ENCODE measurements at regions of chr2 and their contacts with region 1.

Region 1: GRCh38 chr2:68251187-68251854 is 1.0 kb downstream of the PPP3R1 start:
- DNase-seq: peak; percentile 84
- ATAC-seq: peak; percentile 79
- H3K4me3 ChIP-seq: peak overlapping the region; percentile 83 to 97 (median 96)
- H3K27ac ChIP-seq: peak overlapping the region; percentile 94
- H3K4me1 ChIP-seq: peaks cover 54% of the 10 kb centered on the region
- H3K27me3 ChIP-seq: no peaks in the 10 kb centered on the region; a peak in 1 of 5 replicates
- CTCF ChIP-seq: peak; percentile 72
- EP300 ChIP-seq: no peak
- POLR2A ChIP-seq: peak in 1 of 2 experiments; percentile 68; a peak in 3 of 4 replicates
- RAD21 ChIP-seq: peak; percentile 51; the same call in 1 of the 2 replicates

Region 2: DNA sequence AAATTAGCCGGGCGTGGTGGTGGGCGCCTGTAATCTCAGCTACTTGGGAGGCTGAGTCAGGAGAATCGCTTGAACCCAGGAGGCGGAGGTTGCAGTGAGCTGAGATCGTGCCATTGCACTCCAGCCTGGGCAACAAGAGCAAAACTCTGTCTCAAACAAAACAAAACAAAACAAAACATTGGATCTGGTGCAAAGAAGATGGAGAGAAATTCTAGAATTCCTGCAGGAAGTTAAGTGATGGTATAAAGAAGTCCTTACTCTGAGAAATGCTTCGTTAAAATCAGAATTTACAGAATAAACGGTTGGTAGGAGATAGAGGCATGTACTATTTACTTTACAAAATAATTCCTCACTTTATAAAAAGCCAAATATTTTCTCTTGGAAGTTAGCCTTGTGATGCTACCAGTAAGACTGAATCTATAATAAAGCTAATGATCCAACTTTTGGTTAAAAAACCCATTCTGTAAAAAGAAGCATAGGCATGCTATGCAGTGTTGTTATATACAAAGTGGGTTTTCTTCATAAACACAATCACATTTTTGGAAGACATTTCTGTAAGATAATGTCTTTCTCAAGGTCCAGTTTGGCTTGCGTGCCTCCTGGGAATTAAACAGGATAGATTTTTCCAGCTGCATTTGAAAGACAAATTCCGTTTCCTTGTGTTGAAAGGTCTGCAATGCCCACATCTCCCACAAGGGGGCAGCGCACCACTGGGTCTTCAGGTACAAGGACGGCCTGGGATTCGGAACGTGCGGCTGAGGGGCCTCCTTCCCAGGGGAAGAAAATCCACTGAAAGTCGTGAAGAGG is 129.2 kb before region 1 on chr2:
- CTCF ChIA-PET with region 1: interaction called, 3 read pairs
- POLR2A ChIA-PET with region 1: no interaction called
- in situ Hi-C with region 1: no loop called
- intact Hi-C with region 1: loop called (anchors 1 kb)
- DNase-seq: peak; percentile 78
- ATAC-seq: peak; percentile 63
- H3K4me3 ChIP-seq: peak overlapping the region in 1 of 3 experiments; percentile 44; a peak in 1 of 6 replicates
- H3K27ac ChIP-seq: no peak overlapping the region
- H3K4me1 ChIP-seq: peaks cover 31% of the 10 kb centered on the region
- H3K27me3 ChIP-seq: no peaks in the 10 kb centered on the region
- CTCF ChIP-seq: peak; percentile 96
- EP300 ChIP-seq: no peak
- POLR2A ChIP-seq: no peak
- RAD21 ChIP-seq: peak; percentile 87

Region 3: DNA sequence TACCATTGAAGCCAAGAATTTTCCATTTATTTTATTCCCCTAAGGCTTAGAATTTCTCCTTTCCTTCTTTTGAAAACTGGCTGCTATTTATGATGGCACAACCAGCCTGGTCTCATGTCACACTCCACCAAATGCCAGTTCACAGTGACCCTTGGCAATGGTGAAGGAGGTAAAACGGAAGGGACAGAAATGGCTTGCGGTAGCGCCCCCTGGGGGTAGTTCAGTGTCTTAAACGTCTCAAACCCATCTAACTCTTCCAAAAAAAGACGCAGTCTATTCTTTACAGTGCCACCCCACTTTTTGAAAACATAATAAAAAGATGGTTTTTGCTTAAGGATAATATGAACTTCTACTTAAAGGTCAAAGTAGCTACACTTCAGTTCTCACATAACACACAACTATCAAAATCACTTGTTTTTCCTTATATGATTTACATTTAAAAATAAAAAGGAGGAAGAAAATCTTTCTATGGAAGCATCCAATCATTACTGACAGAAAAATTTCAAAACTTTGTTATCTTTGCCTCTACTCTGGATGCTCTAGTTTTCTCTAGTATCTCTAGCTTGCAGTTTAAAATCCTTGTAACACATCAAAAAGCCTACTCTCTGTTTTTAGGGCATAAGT is 65.7 kb before region 1 on chr2:
- CTCF ChIA-PET with region 1: no interaction called
- POLR2A ChIA-PET with region 1: no interaction called
- in situ Hi-C with region 1: no loop called
- intact Hi-C with region 1: loop called (anchors 5 kb)
- DNase-seq: peak; percentile 52
- ATAC-seq: peak; percentile 77
- H3K4me3 ChIP-seq: no peak overlapping the region
- H3K27ac ChIP-seq: no peak overlapping the region
- H3K4me1 ChIP-seq: peaks cover 11% of the 10 kb centered on the region
- H3K27me3 ChIP-seq: no peaks in the 10 kb centered on the region
- CTCF ChIP-seq: peak; percentile 69
- EP300 ChIP-seq: no peak
- POLR2A ChIP-seq: no peak
- RAD21 ChIP-seq: peak; percentile 40; the same call in 1 of the 2 replicates

Region 4: DNA sequence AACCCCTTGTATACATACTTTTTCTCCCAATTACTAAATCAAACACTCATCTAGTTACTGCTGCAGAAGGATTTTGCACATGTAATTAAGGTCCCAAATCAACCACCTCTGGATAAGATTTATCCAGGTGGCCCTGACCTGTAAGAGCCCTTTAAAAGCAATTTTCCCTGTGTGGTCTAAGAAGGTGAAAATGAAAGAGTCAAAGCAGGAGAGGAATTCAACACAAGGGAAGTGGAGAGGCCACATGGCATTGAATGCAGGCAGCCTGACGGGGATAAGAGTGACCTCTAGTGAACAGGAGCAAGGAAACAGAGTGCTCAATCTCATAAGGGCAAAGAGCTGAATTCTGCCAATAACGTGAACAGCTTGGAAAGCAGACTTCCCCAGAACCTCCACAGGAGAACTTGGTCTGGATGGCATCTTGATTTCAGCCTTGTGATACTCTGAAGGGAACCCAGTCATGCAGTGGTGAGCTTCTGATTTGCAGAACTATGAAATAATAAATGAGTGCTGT is 26.1 kb before region 1 on chr2:
- CTCF ChIA-PET with region 1: no interaction called
- POLR2A ChIA-PET with region 1: interaction called, 3 read pairs
- in situ Hi-C with region 1: no loop called
- intact Hi-C with region 1: loop called (anchors 1 kb)
- DNase-seq: peak; percentile 68
- ATAC-seq: peak; percentile 99
- H3K4me3 ChIP-seq: no peak overlapping the region
- H3K27ac ChIP-seq: peak overlapping the region; percentile 13
- H3K4me1 ChIP-seq: peaks cover 34% of the 10 kb centered on the region
- H3K27me3 ChIP-seq: no peaks in the 10 kb centered on the region
- CTCF ChIP-seq: peak; percentile 84
- EP300 ChIP-seq: no peak
- POLR2A ChIP-seq: no peak
- RAD21 ChIP-seq: peak; percentile 41

Measured in HepG2 (cell line).